ENCODE measurements at regions of chr7 and their contacts with region 1.

Region 1: DNA sequence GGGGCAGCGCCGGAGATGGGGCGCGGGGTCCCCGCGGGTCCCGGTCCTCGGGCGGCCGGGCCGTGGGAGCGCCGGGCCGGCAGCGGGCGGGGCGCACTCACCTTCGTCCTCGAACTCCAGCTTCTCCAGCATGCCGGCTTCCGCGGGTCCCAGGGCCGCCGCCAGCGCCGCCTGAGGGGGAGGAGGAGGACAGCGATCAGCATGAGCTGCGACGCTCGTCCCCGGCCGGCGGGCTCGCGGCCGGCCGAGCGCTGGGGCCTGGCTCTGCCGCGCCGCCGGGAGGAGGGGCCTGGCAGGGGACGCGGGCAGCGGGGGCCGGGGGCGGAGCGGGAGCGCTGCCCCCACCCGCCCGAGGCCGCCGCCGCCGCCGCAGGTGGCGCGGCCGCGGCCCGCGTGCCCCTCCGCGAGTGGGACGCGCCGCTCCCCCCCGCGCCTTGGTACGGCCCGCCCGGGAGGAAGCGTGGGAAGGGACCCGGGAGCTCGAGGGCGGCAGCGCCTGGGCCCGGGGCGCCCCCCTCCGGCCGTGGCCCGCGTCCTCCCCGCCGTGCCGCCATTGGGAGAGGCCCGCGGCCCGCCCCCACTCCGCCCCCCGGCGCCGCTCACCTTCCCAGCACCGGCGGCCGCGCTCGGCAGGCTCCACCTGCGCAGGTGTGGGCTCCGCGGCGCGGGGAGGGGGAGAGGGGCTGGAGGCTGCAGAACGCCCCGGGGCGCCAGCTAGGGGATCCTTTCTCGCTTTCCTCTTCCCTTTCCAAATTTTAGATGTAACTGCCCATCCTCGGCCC is 112.5 kb upstream of the RHEB start:
- DNase-seq: peak; percentile 81 to 95 (median 87)
- ATAC-seq: peak; percentile 93
- H3K4me3 ChIP-seq: peak overlapping the region; percentile 80
- H3K4me3 Mint-ChIP-seq: peak overlapping the region; percentile 89 to 99 (median 96)
- H3K27ac ChIP-seq: peak overlapping the region; percentile 81
- H3K27ac Mint-ChIP-seq: peak overlapping the region; percentile 90 to 97 (median 95)
- H3K4me1 ChIP-seq: peaks cover 12% of the 10 kb centered on the region in 2 donors
- H3K4me1 Mint-ChIP-seq: peaks cover 14 to 48% (median 30%) of the 10 kb centered on the region in 7 donors
- H3K27me3 ChIP-seq: no peaks in the 10 kb centered on the region
- H3K27me3 Mint-ChIP-seq: no peaks in the 10 kb centered on the region

Region 2: GRCh38 chr7:150974468-150975391 is 657.4 kb before region 1 on chr7:
- CTCF ChIA-PET with region 1: no interaction called
- POLR2A ChIA-PET with region 1: no interaction called
- intact Hi-C with region 1: no loop called
- DNase-seq: peak; percentile 63 to 84 (median 80)
- ATAC-seq: peak; percentile 85
- H3K4me3 ChIP-seq: peak overlapping the region; percentile 63
- H3K4me3 Mint-ChIP-seq: peak overlapping the region; percentile 85 to 92 (median 88)
- H3K27ac ChIP-seq: peak overlapping the region; percentile 73
- H3K27ac Mint-ChIP-seq: peak overlapping the region; percentile 59 to 97 (median 95)
- H3K4me1 ChIP-seq: peaks cover 20 to 47% of the 10 kb centered on the region in 2 donors
- H3K4me1 Mint-ChIP-seq: peaks cover 33 to 62% (median 55%) of the 10 kb centered on the region in 7 donors
- H3K27me3 ChIP-seq: peaks cover 7 to 13% of the 10 kb centered on the region in 2 donors
- H3K27me3 Mint-ChIP-seq: peaks cover 9 to 36% (median 25%) of the 10 kb centered on the region in 5 donors

Region 3: DNA sequence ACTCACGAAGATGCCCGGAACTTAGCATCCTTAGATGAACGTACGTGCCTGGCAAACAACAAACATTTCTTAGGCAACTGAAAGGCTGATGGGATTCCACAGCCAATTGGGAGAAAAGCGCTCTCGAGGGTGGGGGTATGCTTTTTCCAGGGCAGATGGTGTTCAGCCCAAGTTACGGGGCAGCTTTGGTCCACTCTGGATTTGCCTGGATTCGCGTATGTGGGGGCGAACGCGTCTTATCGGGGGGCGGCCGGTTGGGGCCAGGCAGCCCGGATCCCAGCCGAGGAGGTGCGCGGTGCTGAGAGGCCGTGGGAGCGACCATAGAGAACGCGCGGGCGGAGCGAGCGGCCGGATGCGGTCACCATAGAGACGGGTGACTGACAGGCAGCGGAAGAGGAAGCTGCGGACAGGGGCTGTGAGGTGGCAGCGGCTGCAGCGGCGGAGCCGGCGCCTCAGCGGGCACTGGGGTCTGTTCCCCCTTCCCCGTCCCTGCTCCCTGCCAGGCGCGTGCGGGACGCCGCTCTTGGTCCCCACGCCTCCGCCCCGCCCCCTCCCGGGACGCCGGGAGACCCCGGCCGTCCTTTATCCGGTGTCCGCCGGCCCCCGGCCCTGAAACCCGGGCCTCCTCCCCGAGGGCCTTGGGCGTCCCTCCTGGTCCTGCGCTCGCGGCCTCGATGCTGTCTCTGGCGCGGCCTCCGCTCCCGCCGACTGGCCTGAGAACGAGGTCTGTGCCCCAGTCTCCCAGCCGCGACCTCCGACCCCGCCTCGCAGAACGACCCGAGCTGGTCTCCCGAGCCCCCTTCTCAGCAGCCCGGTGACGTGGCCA is 399.9 kb before region 1 on chr7 and contains the start of gene CHPF2:
- CTCF ChIA-PET with region 1: no interaction called
- POLR2A ChIA-PET with region 1: no interaction called
- intact Hi-C with region 1: loop called in 1 of 2 experiments (anchors 5 kb)
- DNase-seq: peak; percentile 74 to 91 (median 84)
- ATAC-seq: peak; percentile 94
- H3K4me3 ChIP-seq: peak within 1 kb of the TSS; percentile 90
- H3K4me3 Mint-ChIP-seq: peak within 1 kb of the TSS; percentile 93 to 100 (median 98)
- H3K27ac ChIP-seq: peak within 1 kb of the TSS; percentile 85
- H3K27ac Mint-ChIP-seq: peak within 1 kb of the TSS; percentile 87 to 99 (median 98)
- H3K4me1 ChIP-seq: peaks cover 19 to 23% of the 10 kb centered on the region in 2 donors
- H3K4me1 Mint-ChIP-seq: peaks cover 30 to 45% (median 39%) of the 10 kb centered on the region in 7 donors
- H3K27me3 ChIP-seq: no peaks in the 10 kb centered on the region
- H3K27me3 Mint-ChIP-seq: peaks cover 0 to 6% (median 0%) of the 10 kb centered on the region in 5 donors
- total RNA-seq, gene CHPF2: 32.3 to 45.8 (median 42.8) TPM

Region 4: DNA sequence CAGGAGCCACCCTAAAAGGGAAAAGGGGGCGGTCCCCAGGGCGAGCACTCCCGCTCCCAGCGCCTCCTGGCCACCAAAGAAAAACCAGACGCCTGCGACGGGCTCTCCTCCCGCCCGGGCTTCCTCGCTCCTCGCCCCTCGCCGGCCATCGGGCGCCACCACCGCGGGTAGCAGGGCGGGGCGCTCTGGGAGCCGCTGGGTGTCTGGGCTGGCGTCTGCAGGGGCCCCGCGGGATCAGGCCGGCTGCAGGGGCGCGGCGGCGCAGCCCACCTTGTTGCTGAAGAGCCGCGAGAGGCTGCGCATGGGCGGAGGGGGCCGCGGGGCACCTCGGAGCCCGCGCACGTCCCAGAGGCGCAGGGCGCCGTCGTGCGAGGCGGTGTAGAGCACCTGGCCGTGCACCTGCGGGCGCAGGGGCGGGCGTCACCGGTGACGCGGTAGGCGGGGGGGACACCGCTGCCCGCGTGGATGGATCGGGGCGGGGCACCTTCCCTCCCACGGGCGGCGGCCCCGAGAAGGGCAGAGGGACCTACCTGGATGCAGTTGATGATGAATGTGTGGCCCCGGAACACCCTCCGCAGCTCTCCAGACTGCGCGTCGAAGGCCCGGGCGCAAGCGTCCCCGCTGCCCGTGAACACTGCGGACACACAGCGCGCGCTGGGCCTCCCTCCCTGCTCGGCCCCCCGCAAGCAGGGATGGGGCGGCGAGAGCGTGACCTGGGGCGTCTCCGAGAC is 250.6 kb before region 1 on chr7:
- CTCF ChIA-PET with region 1: no interaction called
- POLR2A ChIA-PET with region 1: no interaction called
- intact Hi-C with region 1: loop called in 1 of 2 experiments (anchors 5 kb)
- DNase-seq: peak in 8 of 9 donors; percentile 39 to 72 (median 54)
- ATAC-seq: peak; percentile 86
- H3K4me3 ChIP-seq: peak overlapping the region; percentile 63
- H3K4me3 Mint-ChIP-seq: peak overlapping the region in 9 of 10 donors; percentile 16 to 90 (median 77)
- H3K27ac ChIP-seq: peak overlapping the region; percentile 62
- H3K27ac Mint-ChIP-seq: peak overlapping the region in 2 of 9 donors; percentile 36 to 80
- H3K4me1 ChIP-seq: peaks cover 12 to 19% of the 10 kb centered on the region in 2 donors
- H3K4me1 Mint-ChIP-seq: peaks cover 6 to 14% (median 9%) of the 10 kb centered on the region in 7 donors
- H3K27me3 ChIP-seq: peaks cover 0 to 6% of the 10 kb centered on the region in 2 donors
- H3K27me3 Mint-ChIP-seq: peaks cover 4 to 29% (median 6%) of the 10 kb centered on the region in 5 donors

Region 5: DNA sequence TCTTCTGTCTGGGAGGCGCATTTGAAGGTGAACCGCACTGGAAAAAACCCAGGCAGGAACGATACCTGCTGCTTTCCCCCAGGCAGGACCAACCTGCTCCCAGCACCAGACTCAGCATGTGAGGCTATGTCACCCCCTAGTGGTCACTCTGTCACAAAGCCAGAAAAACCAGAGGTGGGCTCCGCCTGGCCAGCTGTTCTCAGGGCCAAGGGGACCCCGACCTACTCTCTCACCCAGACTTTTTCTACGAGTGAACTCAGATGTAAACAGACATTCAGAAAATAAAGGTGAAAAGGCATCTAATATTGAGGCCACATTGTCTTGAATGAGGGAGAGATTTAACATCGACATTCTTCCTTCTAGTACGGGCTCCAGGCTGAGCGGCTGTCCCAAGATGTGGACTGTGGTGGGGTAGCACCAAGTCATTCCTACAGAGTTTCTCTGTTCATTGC is 127.5 kb after region 1 on chr7:
- CTCF ChIA-PET with region 1: interaction called, 7 read pairs
- POLR2A ChIA-PET with region 1: interaction called, 4 read pairs
- intact Hi-C with region 1: loop called (anchors 1 to 2 kb)
- DNase-seq: peak in 8 of 9 donors; percentile 38 to 67 (median 58)
- ATAC-seq: peak; percentile 67
- H3K4me3 ChIP-seq: no peak overlapping the region
- H3K4me3 Mint-ChIP-seq: no peak overlapping the region
- H3K27ac ChIP-seq: no peak overlapping the region
- H3K27ac Mint-ChIP-seq: peak overlapping the region in 6 of 9 donors; percentile 8 to 83 (median 56)
- H3K4me1 ChIP-seq: peaks cover 12 to 22% of the 10 kb centered on the region in 2 donors
- H3K4me1 Mint-ChIP-seq: peaks cover 17 to 60% (median 33%) of the 10 kb centered on the region in 7 donors
- H3K27me3 ChIP-seq: no peaks in the 10 kb centered on the region
- H3K27me3 Mint-ChIP-seq: no peaks in the 10 kb centered on the region

Region 6: GRCh38 chr7:151936207-151936606 is 304.0 kb after region 1 on chr7:
- CTCF ChIA-PET with region 1: no interaction called
- POLR2A ChIA-PET with region 1: no interaction called
- intact Hi-C with region 1: loop called in 1 of 2 experiments (anchors 1 kb)
- DNase-seq: peak in 7 of 9 donors; percentile 43 to 78 (median 67)
- ATAC-seq: peak; percentile 83
- H3K4me3 ChIP-seq: peak overlapping the region; percentile 39
- H3K4me3 Mint-ChIP-seq: peak overlapping the region; percentile 67 to 91 (median 80)
- H3K27ac ChIP-seq: peak overlapping the region; percentile 68
- H3K27ac Mint-ChIP-seq: peak overlapping the region; percentile 91 to 99 (median 97)
- H3K4me1 ChIP-seq: peaks cover 8% of the 10 kb centered on the region in 2 donors
- H3K4me1 Mint-ChIP-seq: peaks cover 17 to 40% (median 26%) of the 10 kb centered on the region in 7 donors
- H3K27me3 ChIP-seq: no peaks in the 10 kb centered on the region
- H3K27me3 Mint-ChIP-seq: peaks cover 0 to 27% (median 0%) of the 10 kb centered on the region in 5 donors

Region 7: GRCh38 chr7:152463709-152464311 is 831.7 kb after region 1 on chr7:
- CTCF ChIA-PET with region 1: no interaction called
- POLR2A ChIA-PET with region 1: no interaction called
- intact Hi-C with region 1: loop called in 1 of 2 experiments (anchors 5 kb)
- DNase-seq: peak; percentile 99 to 100 (median 100)
- ATAC-seq: peak; percentile 96
- H3K4me3 ChIP-seq: peak overlapping the region; percentile 82
- H3K4me3 Mint-ChIP-seq: peak overlapping the region; percentile 64 to 96 (median 92)
- H3K27ac ChIP-seq: peak overlapping the region; percentile 99
- H3K27ac Mint-ChIP-seq: peak overlapping the region in 7 of 9 donors; percentile 62 to 93 (median 88)
- H3K4me1 ChIP-seq: peaks cover 5% of the 10 kb centered on the region in 2 donors
- H3K4me1 Mint-ChIP-seq: peaks cover 5 to 17% (median 7%) of the 10 kb centered on the region in 7 donors
- H3K27me3 ChIP-seq: no peaks in the 10 kb centered on the region
- H3K27me3 Mint-ChIP-seq: no peaks in the 10 kb centered on the region

Measured in naive thymus-derived CD4-positive, alpha-beta T cell (primary cell).